Dorsolateral prefrontal cortex (tissue), 120 donors: ENCODE measurements at regions of chr4 and their contacts with region 1.

Region 1: DNA sequence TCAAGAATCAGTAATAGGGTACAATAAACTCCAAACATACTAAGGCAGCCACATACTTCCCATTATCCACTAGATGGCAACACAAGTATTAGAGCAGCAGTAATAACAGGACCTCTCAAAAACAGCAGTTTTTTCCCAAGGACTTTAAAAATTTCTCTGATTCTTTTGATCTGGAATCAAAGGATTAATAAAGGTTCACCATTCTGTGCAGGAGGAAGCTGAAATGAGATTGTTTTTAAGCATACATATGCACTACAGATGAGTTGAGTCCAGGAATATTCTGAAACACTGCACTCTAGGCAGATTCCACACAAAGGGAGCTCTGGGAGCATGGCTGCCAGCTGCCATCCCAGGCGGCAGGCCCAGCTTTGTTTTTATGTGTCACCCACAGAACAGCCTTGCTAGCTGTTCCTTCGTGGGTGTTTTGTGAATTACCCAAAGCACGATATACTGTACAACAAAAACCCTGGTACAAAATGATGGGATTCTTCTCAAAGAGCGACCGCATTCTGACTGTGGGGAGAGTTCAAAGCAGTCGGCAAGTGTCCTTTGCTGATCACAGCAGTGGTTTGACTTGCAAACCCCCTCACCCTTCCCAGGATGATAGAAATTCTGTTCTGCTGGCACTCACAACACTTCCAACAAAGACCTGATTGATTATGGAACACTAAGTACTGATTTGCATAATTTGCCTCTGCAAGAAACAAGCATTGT is 61.0 kb downstream of the STX18 start:
- DNase-seq: peak; percentile 30 to 91 (median 86)
- H3K4me3 ChIP-seq: peak overlapping the region in 34 of 59 donors; percentile 0 to 56 (median 26)
- H3K27ac ChIP-seq: peak overlapping the region; percentile 33 to 95 (median 87)
- H3K27me3 ChIP-seq: no peaks in the 10 kb centered on the region
- CTCF ChIP-seq: peak; percentile 37 to 82 (median 63)

Region 2: DNA sequence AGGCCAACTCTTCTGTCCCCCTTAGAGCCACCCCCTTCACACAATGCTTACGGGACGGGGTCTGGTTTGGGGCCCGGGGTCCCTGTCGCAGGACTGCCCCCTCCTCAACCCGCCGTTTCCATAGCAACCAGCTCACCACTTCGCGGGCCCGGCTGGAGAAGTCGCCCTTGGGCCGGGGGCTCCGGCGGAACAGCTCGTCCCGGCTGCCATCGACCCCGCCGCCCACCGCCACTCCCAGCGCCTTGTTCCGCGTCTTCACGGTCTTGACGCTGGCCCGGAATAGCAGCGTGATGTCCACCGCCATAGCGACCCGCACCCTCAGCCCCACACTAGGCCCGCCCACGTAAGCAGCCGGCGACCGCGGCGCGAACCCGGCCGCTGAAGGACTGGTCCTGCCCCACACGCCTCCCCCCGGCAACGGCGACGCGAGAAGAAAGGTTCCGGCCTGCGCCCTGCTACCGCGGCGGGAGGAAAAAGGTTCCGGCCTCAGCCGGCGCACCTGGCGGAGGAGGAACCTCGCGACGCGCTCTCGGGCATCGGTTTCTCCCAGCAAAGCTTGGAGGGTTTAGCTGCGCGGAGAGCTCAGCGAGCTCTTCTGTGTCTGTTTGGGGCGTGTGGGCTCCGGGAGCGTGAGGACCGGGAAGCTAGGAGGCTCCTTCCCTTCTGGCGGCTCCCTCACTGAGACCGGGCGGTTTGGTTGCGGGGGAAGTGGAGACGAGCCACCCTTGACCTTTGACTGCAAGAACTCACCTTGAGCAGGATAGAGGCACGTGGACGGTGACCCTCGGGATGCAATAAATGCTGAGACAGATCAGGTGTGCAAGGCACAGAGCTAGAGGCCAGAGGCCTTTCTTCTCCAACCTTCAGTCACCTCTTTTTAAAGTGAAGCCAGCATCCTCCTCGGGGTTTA is 61.1 kb after region 1 on chr4 and contains the start of gene STX18:
- intact Hi-C with region 1: loop called in 1 of 2 experiments (anchors 5 kb)
- DNase-seq: peak; percentile 60 to 89 (median 75)
- H3K4me3 ChIP-seq: peak within 1 kb of the TSS; percentile 68 to 100 (median 96)
- H3K27ac ChIP-seq: peak within 1 kb of the TSS in 57 of 59 donors; percentile 28 to 93 (median 78)
- H3K27me3 ChIP-seq: no peaks in the 10 kb centered on the region
- CTCF ChIP-seq: peak in 45 of 56 donors; percentile 11 to 67 (median 36)
- total RNA-seq, gene STX18: 17.3 to 46.2 (median 31.7) TPM

Region 3: GRCh38 chr4:4575273-4576211 is 94.7 kb after region 1 on chr4:
- intact Hi-C with region 1: loop called in 1 of 2 experiments (anchors 2 kb)
- DNase-seq: peak in 6 of 10 donors; percentile 14 to 68 (median 36)
- H3K4me3 ChIP-seq: peak overlapping the region; percentile 46 to 84 (median 73)
- H3K27ac ChIP-seq: peak overlapping the region in 42 of 59 donors; percentile 2 to 82 (median 60)
- H3K27me3 ChIP-seq: no peaks in the 10 kb centered on the region
- CTCF ChIP-seq: peak in 53 of 56 donors; percentile 9 to 68 (median 49)

Region 4: DNA sequence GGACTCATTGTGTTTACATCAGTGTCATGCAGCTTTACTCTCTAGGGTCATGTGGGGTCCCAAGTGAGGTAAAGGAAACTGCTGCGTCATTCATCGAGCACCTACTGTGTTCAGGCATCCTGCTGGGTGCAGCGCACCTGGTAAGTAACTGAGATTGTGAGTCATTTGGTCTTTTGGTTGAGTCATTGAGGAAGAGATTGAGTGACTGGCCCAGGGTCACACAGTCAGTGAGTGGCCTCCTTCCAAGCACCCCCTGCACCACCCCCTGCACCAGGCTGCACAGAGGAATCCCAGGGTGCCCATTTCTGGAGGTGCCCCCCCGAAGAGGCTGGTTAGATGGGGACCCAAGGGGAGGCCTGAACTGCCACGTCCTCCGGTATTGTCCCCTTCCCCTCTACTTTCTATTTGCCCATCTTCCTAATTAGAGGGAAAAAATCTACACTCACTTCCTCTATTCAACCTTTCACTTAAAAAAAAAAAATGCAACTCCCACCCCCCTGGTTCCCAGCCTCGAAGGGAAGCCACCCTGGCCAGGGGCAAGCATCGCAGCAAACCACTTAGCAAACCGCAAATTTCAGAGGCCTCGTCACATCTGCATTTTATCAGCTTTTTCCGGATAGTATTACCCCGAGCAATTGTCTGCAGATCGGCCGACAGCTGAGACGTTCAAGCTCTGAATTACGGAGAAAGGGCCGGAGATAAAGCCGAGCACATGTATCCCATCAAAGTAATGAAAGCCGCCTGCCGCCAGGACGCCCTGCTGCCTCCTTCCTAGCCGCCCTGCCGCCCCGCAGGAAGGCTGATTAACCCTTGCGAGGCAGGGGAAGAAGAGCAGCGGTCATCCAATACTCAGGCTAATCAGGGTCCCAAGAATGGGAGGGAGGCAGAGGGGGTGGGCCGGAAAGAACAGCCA is 282.3 kb after region 1 on chr4:
- intact Hi-C with region 1: loop called in 1 of 2 experiments (anchors 5 kb)
- DNase-seq: no peak
- H3K4me3 ChIP-seq: no peak overlapping the region
- H3K27ac ChIP-seq: no peak overlapping the region
- H3K27me3 ChIP-seq: no peaks in the 10 kb centered on the region
- CTCF ChIP-seq: no peak

Region 5: GRCh38 chr4:4805887-4806286 is 325.0 kb after region 1 on chr4:
- intact Hi-C with region 1: loop called in 1 of 2 experiments (anchors 5 kb)
- DNase-seq: no peak
- H3K4me3 ChIP-seq: no peak overlapping the region
- H3K27ac ChIP-seq: no peak overlapping the region
- H3K27me3 ChIP-seq: no peaks in the 10 kb centered on the region
- CTCF ChIP-seq: no peak